OCI-LY7 (cell line): ENCODE measurements at regions of chr7 and their contacts with region 1.

Region 1: DNA sequence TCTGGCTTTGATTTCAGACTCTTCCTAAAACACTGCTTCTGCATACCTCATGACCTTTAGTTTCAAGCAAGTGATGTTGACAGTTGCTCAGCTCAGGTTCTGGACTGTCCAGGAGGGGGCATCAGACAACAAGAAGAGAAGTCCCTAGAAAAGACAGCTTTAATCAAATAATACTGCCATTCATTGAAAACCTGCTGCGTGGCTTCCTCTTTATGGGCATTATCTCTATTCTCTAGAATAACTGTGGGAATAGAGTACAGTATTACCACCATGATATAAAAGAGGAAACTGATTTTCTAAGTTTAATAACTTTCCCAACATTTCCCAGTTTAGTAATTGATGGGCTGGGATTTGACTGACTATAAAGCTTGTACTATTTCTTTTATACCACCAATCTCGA is 170.4 kb downstream of the SNX13 start:
- DNase-seq: peak; percentile 66
- H3K4me3 ChIP-seq: no peak overlapping the region
- H3K27ac ChIP-seq: no peak overlapping the region
- H3K4me1 ChIP-seq: no peaks in the 10 kb centered on the region
- CTCF ChIP-seq: peak; percentile 91

Region 2: DNA sequence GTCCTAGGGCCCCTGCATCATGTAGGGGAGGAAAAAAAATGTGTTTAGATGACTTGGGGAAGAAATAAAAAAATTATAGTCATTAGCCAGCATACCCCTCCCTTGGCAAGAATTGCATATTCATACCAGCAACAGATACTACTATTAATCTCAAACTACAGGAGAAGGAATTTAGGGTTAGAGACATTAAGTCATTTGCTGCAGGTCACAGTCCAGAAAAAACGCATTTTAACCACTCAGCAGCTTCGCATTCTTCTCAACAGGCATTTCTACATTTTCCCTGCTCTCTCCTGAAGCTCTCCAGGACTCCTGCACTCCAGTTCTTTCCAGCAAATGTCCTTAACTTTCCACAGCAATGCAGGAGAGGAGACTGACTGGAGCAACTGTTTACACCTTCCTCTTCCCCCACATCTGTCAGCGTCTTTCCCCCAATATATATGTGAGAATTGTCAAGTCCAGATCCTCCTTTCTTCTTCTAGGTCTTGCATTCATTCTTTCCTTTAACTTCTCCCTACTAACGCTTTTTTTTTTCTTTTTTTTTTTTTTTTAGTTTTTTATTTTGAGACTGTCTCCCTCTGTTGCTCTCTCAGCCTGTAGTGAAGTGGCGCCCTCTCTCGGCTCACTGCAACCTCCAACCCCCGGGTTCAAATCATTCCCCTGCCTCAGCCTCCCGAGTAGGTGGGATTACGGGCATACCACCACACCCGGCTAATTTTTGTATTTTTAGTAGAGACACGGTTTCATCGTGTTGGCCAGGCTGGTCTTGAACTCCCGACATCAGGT is 222.1 kb after region 1 on chr7:
- CTCF ChIA-PET with region 1: interaction called, 3 read pairs
- POLR2A ChIA-PET with region 1: interaction called, 3 read pairs
- intact Hi-C with region 1: loop called (anchors 1 kb)
- DNase-seq: peak; percentile 14
- H3K4me3 ChIP-seq: no peak overlapping the region
- H3K27ac ChIP-seq: no peak overlapping the region
- H3K4me1 ChIP-seq: no peaks in the 10 kb centered on the region
- CTCF ChIP-seq: peak; percentile 70

Region 3: GRCh38 chr7:18320971-18321567 is 551.2 kb after region 1 on chr7:
- CTCF ChIA-PET with region 1: no interaction called
- POLR2A ChIA-PET with region 1: no interaction called
- intact Hi-C with region 1: loop called (anchors 5 kb)
- DNase-seq: peak; percentile 47
- H3K4me3 ChIP-seq: no peak overlapping the region
- H3K27ac ChIP-seq: no peak overlapping the region
- H3K4me1 ChIP-seq: no peaks in the 10 kb centered on the region
- CTCF ChIP-seq: peak; percentile 80

Region 4: GRCh38 chr7:18345641-18346234 is 575.8 kb after region 1 on chr7:
- CTCF ChIA-PET with region 1: no interaction called
- POLR2A ChIA-PET with region 1: interaction called, 4 read pairs
- intact Hi-C with region 1: loop called (anchors 1 kb)
- DNase-seq: peak; percentile 47
- H3K4me3 ChIP-seq: no peak overlapping the region
- H3K27ac ChIP-seq: no peak overlapping the region
- H3K4me1 ChIP-seq: no peaks in the 10 kb centered on the region
- CTCF ChIP-seq: peak; percentile 91